ENCODE measurements at regions of chr15 and their contacts with region 1.

Region 1: GRCh38 chr15:25568751-25569150 is 129.9 kb upstream of the UBE3A start:
- DNase-seq: peak; percentile 30 to 33
- ATAC-seq: peak; percentile 61 to 93 (median 78)
- H3K4me3 ChIP-seq: no peak overlapping the region
- H3K27ac ChIP-seq: peak overlapping the region in 5 of 10 donors; percentile 51 to 72 (median 57)
- H3K4me1 ChIP-seq: peaks cover 0 to 47% (median 13%) of the 10 kb centered on the region in 9 donors
- H3K27me3 ChIP-seq: no peaks in the 10 kb centered on the region
- CTCF ChIP-seq: no peak

Region 2: GRCh38 chr15:25438601-25439368 is 130.0 kb before region 1 on chr15 and contains the start of gene UBE3A:
- intact Hi-C with region 1: no loop called
- DNase-seq: peak; percentile 89 to 94
- ATAC-seq: peak; percentile 97 to 99 (median 98)
- H3K4me3 ChIP-seq: peak within 1 kb of the TSS; percentile 71 to 100 (median 94)
- H3K27ac ChIP-seq: peak within 1 kb of the TSS; percentile 95 to 100 (median 99)
- H3K4me1 ChIP-seq: peaks cover 3 to 42% (median 30%) of the 10 kb centered on the region in 9 donors
- H3K27me3 ChIP-seq: no peaks in the 10 kb centered on the region
- CTCF ChIP-seq: peak in 7 of 9 donors; percentile 9 to 50 (median 32)
- total RNA-seq, gene UBE3A: 101 to 146 (median 112) TPM

Region 3: GRCh38 chr15:25670025-25670554 is 101.3 kb after region 1 on chr15:
- intact Hi-C with region 1: loop called in 1 of 10 experiments (anchors 5 kb)
- DNase-seq: peak; percentile 68 to 78
- ATAC-seq: peak; percentile 91 to 96 (median 94)
- H3K4me3 ChIP-seq: peak overlapping the region in 6 of 10 donors; percentile 13 to 43 (median 33)
- H3K27ac ChIP-seq: peak overlapping the region in 9 of 10 donors; percentile 10 to 90 (median 75)
- H3K4me1 ChIP-seq: peaks cover 3 to 34% (median 20%) of the 10 kb centered on the region in 9 donors
- H3K27me3 ChIP-seq: peaks cover 0 to 11% (median 0%) of the 10 kb centered on the region in 7 donors
- CTCF ChIP-seq: peak in 1 of 9 donors; percentile 27

Region 4: GRCh38 chr15:25684521-25685431 is 116.0 kb after region 1 on chr15:
- intact Hi-C with region 1: loop called in 1 of 10 experiments (anchors 5 kb)
- DNase-seq: no peak
- ATAC-seq: peak in 6 of 8 donors; percentile 21 to 73 (median 55)
- H3K4me3 ChIP-seq: no peak overlapping the region
- H3K27ac ChIP-seq: peak overlapping the region in 4 of 10 donors; percentile 6 to 48 (median 23)
- H3K4me1 ChIP-seq: peaks cover 3 to 36% (median 23%) of the 10 kb centered on the region in 9 donors
- H3K27me3 ChIP-seq: no peaks in the 10 kb centered on the region
- CTCF ChIP-seq: no peak

Measured in heart right ventricle (tissue), 16 donors.